OCI-LY7 (cell line): ENCODE measurements at regions of chr13 and their contacts with region 1.

Region 1: GRCh38 chr13:111202745-111203144 is 87.6 kb downstream of the ARHGEF7 start:
- DNase-seq: peak; percentile 66
- H3K4me3 ChIP-seq: peak overlapping the region; percentile 62
- H3K27ac ChIP-seq: peak overlapping the region; percentile 93
- H3K4me1 ChIP-seq: peaks cover 85% of the 10 kb centered on the region
- CTCF ChIP-seq: no peak

Region 2: GRCh38 chr13:111161601-111162600 is 40.8 kb before region 1 on chr13:
- CTCF ChIA-PET with region 1: interaction called, 4 read pairs
- POLR2A ChIA-PET with region 1: interaction called, 3 read pairs
- intact Hi-C with region 1: loop called (anchors 5 kb)
- DNase-seq: peak; percentile 34
- H3K4me3 ChIP-seq: peak overlapping the region; percentile 43
- H3K27ac ChIP-seq: peak overlapping the region; percentile 65
- H3K4me1 ChIP-seq: peaks cover 47% of the 10 kb centered on the region
- CTCF ChIP-seq: no peak